ENCODE measurements at regions of chr13 and their contacts with region 1.

Region 1: GRCh38 chr13:46492946-46493345 is 60.0 kb upstream of the LRCH1 start:
- DNase-seq: peak in 1 of 7 donors; percentile 15
- H3K4me3 ChIP-seq: no peak overlapping the region
- H3K27ac ChIP-seq: no peak overlapping the region
- H3K4me1 ChIP-seq: no peaks in the 10 kb centered on the region
- H3K27me3 ChIP-seq: no peaks in the 10 kb centered on the region
- CTCF ChIP-seq: peak; percentile 34 to 70 (median 56)
- POLR2A ChIP-seq: no peak

Region 2: DNA sequence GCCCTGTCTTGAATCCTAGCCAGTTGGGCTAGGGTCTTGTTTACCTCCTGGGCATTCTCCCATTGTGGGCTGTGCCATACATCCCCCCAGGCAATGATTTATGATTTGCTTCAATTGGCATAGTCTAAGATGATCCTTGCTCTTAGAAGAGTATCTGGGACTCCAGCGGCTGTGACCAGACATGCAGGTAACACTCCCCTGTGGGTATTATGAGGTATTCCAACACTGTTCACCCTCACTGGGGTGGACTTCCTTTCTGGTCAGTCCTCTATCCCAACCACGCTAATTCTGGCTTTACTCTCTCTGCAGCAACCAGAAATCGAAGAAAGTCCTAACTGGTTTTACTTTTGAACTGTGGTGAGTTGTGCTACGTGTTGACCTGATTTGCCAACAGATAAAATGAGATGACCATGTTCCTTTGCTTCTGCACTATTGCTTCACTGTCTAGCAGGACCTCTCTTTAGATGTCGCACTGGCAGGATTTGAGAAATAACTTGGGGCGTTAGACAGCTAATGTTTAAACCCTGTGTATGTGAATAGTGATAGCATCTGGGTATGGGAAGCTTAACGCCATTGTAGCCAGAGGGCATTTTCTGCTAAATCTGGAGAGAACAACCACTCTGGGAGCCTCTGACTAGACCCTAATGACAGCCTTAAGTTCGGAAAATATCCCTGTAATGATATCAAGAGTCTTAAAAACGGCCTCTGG is 53.3 kb after region 1 on chr13:
- intact Hi-C with region 1: loop called in 1 of 2 experiments (anchors 5 kb)
- DNase-seq: no peak
- H3K4me3 ChIP-seq: no peak overlapping the region
- H3K27ac ChIP-seq: no peak overlapping the region
- H3K4me1 ChIP-seq: peaks cover 0 to 5% of the 10 kb centered on the region in 2 donors
- H3K27me3 ChIP-seq: no peaks in the 10 kb centered on the region
- CTCF ChIP-seq: no peak
- POLR2A ChIP-seq: no peak

Region 3: DNA sequence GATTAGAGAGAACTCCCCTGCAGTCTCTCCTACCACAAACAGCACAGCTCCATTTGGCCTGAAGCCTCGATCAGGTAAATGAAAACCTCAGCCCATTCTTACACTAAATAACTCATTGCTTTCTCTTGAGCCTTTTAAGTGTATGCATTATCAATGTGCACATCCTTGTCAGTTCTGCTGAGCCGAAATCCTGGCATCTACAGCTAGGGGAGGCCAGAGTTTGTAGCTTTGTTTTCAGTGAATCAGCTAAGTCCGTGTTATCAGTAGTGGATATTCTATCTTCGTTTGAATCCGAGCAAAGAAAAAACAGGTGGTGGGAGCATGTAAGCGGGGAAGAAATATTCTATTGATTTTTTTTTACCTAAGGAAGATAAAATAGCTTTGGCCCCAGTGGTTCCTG is 219.6 kb after region 1 on chr13:
- intact Hi-C with region 1: loop called in 1 of 2 experiments (anchors 10 kb)
- DNase-seq: no peak
- H3K4me3 ChIP-seq: no peak overlapping the region
- H3K27ac ChIP-seq: no peak overlapping the region
- H3K4me1 ChIP-seq: no peaks in the 10 kb centered on the region
- H3K27me3 ChIP-seq: no peaks in the 10 kb centered on the region
- CTCF ChIP-seq: peak in 1 of 6 experiments; percentile 3
- POLR2A ChIP-seq: no peak

Region 4: GRCh38 chr13:46721054-46721453 is 228.1 kb after region 1 on chr13:
- intact Hi-C with region 1: loop called (anchors 5 to 10 kb)
- DNase-seq: peak in 6 of 7 donors; percentile 34 to 71 (median 52)
- H3K4me3 ChIP-seq: no peak overlapping the region
- H3K27ac ChIP-seq: no peak overlapping the region
- H3K4me1 ChIP-seq: peaks cover 0 to 7% of the 10 kb centered on the region in 2 donors
- H3K27me3 ChIP-seq: no peaks in the 10 kb centered on the region
- CTCF ChIP-seq: peak; percentile 40 to 89 (median 76)
- POLR2A ChIP-seq: no peak

Region 5: GRCh38 chr13:46751811-46752635 is 259.1 kb after region 1 on chr13:
- intact Hi-C with region 1: no loop called
- DNase-seq: peak in 2 of 7 donors; percentile 12 to 19
- H3K4me3 ChIP-seq: no peak overlapping the region
- H3K27ac ChIP-seq: no peak overlapping the region
- H3K4me1 ChIP-seq: no peaks in the 10 kb centered on the region
- H3K27me3 ChIP-seq: no peaks in the 10 kb centered on the region
- CTCF ChIP-seq: no peak
- POLR2A ChIP-seq: no peak

Measured in adrenal gland (tissue), 19 donors.